Left colon (tissue), 2 donors: ENCODE measurements at regions of chr1 and their contacts with region 1.

Region 1: GRCh38 chr1:224644553-224645154 is 28.5 kb downstream of the CNIH3 start:
- DNase-seq: peak in 1 of 2 donors; percentile 44
- ATAC-seq: peak; percentile 91

Region 2: DNA sequence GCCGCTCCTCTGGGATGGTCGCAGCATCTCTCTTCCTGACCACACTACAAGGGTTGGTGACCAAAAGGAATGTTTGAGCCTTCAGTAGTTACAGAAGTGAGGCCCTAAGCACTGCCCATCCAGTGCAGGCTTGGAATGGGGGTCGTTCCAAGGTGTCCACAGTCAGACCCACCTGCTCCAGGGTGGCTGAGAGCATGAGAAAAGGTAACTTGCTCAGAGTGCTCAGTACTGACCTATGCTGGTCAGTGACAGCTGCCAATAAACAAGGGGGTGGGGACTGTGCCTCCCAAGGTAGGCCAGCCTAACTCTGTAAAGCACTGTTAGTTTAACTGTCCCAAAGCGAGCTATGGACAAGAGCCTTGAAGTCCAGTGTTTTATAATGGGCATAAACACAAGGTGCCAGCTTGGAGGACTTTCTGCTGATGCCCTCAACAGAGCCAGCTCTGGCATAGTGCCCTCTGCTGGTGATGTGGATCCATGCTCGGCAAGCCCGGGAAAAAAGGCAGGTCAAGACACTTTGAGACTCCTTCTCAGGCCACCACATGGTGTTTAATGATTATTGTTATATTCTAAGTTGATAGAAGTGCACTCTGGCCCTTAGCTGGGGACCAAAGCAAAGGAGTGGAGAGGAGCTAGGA is 206.7 kb after region 1 on chr1:
- intact Hi-C with region 1: loop called (anchors 10 kb)
- DNase-seq: peak; percentile 36 to 77
- ATAC-seq: peak; percentile 84

Region 3: DNA sequence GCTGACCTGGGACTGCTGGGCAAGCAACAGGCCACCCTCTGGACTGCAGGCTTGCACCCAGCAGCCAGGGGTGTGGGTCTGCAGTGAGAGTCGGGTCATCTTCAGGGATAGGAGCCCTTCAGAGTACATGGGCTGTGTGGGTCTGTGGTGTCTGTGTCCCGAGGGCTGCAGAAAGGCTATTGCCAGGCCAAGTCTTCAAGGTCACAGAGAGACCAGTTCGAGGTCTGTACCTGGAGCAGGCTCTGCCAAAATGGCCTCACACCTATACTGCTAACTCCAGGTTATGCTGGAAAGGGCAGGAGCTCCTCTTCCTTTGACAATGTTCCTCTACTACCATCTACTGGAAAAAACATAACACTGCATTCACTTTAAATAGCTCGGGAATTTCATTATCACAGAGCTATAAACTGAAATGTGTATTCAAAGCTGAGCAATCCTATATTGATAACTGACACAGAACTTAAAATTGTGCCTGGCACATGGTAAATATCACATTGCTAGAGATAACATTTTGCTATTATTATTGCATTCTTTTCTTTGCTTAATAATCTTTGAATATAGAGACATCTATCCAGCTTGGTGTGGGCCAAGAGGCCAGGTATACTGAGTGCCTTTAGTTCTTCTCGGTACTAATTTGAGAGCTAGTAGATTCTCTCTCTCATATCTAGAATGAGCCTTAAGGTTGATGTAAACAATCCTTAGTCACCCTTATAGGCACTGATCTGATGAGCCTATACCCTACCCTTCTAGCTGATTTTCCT is 277.9 kb after region 1 on chr1:
- intact Hi-C with region 1: loop called in 1 of 2 experiments (anchors 5 kb)
- DNase-seq: no peak
- ATAC-seq: peak; percentile 93